CD4-positive, alpha-beta memory T cell (primary cell): ENCODE measurements at regions of chr1 and their contacts with region 1.

Region 1: GRCh38 chr1:223142795-223143536 is at the start of gene TLR5:
- DNase-seq: peak; percentile 82 to 87 (median 84)
- H3K4me3 ChIP-seq: peak within 1 kb of the TSS; percentile 6 to 65
- H3K4me3 Mint-ChIP-seq: peak within 1 kb of the TSS; percentile 72 to 87 (median 84)
- H3K27ac ChIP-seq: peak within 1 kb of the TSS; percentile 44
- H3K27ac Mint-ChIP-seq: peak within 1 kb of the TSS; percentile 68 to 92 (median 87)
- H3K4me1 ChIP-seq: peaks cover 19% of the 10 kb centered on the region
- H3K4me1 Mint-ChIP-seq: peaks cover 13 to 31% (median 21%) of the 10 kb centered on the region in 4 donors
- H3K27me3 ChIP-seq: no peaks in the 10 kb centered on the region
- H3K27me3 Mint-ChIP-seq: no peaks in the 10 kb centered on the region
- total RNA-seq, gene TLR5: 5.9 to 7.1 TPM

Region 2: DNA sequence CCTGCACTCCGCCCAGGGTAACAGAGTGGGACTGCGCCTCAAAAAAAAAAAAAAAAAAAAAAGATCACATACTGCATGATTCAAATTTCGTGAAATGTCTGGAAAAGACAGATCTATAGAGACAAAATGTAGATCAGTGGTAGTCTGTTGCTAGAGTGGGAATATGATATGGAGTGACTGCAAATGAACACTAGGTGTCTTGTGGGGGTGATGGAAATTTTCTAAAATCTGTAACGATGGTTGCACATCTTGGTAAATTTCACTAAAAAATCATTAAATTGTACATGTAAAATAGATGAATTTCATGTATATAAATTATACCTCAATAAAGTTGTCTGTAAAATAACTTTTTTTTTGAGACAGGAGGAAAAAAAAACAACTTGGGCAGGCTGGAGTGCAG is 436.2 kb before region 1 on chr1:
- CTCF ChIA-PET with region 1: no interaction called
- POLR2A ChIA-PET with region 1: no interaction called
- intact Hi-C with region 1: no loop called
- DNase-seq: no peak
- H3K4me3 ChIP-seq: no peak overlapping the region
- H3K4me3 Mint-ChIP-seq: no peak overlapping the region
- H3K27ac ChIP-seq: no peak overlapping the region
- H3K27ac Mint-ChIP-seq: no peak overlapping the region
- H3K4me1 ChIP-seq: peaks cover 26% of the 10 kb centered on the region
- H3K4me1 Mint-ChIP-seq: peaks cover 39 to 81% (median 62%) of the 10 kb centered on the region in 4 donors
- H3K27me3 ChIP-seq: no peaks in the 10 kb centered on the region
- H3K27me3 Mint-ChIP-seq: no peaks in the 10 kb centered on the region

Region 3: DNA sequence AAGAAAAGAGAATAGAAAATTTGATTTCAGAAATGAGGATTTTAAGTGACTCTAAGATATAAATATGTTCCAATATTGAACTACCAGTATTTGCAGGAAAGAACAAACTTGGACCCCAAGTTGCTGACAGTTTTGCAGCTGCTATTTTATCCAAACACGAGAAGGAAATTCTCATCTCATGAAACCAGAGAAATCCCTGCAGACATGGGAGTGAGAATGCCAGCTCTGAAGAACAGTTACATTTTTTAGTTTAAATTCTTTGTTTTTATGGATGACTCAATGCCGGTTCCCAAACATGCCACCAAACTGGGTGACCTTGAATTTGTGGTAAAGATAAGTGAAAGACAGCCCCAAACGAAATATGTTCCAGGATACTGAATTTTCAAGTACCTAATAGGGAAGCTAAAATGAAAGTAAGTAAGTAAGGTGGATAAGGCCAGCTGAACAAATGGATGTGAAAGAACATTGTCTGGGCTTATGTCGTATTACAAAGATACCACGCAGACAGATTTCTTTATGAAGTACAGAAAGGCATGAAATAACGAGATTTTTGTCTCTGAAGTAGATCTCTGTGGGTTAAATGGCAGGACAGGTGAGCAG is 19.9 kb before region 1 on chr1:
- CTCF ChIA-PET with region 1: interaction called, 252 read pairs
- POLR2A ChIA-PET with region 1: no interaction called
- intact Hi-C with region 1: no loop called
- DNase-seq: no peak
- H3K4me3 ChIP-seq: peak overlapping the region in 1 of 2 donors; percentile 2
- H3K4me3 Mint-ChIP-seq: peak overlapping the region; percentile 63 to 85 (median 77)
- H3K27ac ChIP-seq: no peak overlapping the region
- H3K27ac Mint-ChIP-seq: peak overlapping the region in 1 of 7 donors; percentile 30
- H3K4me1 ChIP-seq: peaks cover 5% of the 10 kb centered on the region
- H3K4me1 Mint-ChIP-seq: peaks cover 6 to 8% (median 7%) of the 10 kb centered on the region in 4 donors
- H3K27me3 ChIP-seq: no peaks in the 10 kb centered on the region
- H3K27me3 Mint-ChIP-seq: no peaks in the 10 kb centered on the region